ENCODE measurements at regions of chr2 and their contacts with region 1.

Region 1: GRCh38 chr2:30464544-30465170 is 17.6 kb downstream of the LCLAT1 start:
- DNase-seq: no peak
- ATAC-seq: no peak
- H3K4me3 ChIP-seq: peak overlapping the region in 4 of 12 donors; percentile 6 to 31 (median 19)
- H3K27ac ChIP-seq: peak overlapping the region; percentile 17 to 75 (median 54)
- H3K4me1 ChIP-seq: peaks cover 0 to 50% (median 19%) of the 10 kb centered on the region in 12 donors
- H3K27me3 ChIP-seq: no peaks in the 10 kb centered on the region
- CTCF ChIP-seq: no peak
- POLR2A ChIP-seq: no peak

Region 2: DNA sequence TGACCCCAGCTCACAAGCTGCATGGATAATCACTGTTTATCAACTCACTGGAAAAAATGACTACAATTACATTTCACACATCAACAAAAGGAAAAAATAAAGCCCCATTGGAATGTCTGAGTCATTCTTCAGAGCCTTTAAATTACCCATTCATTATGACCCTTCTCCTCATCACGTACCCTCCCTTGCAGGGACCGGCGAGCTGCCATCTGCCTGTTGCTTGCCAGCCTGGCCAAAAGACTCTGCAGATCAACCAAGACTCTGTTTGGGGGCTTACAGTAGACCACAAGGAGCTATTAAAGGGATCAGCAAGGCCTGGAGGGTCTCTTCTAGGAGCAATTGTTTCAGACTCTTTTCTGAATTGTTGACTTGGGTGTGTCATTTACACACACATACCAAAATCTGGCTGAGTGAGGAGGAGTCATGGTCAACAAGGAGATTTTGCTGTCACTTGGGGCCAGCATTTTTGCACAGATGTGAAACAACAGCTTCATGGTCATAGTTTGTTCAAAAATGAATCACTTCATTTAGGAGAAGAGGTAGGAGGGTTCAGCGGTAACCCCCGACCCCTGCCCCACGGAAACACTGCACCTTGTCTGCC is 191.3 kb before region 1 on chr2:
- intact Hi-C with region 1: no loop called
- DNase-seq: no peak
- ATAC-seq: no peak
- H3K4me3 ChIP-seq: no peak overlapping the region
- H3K27ac ChIP-seq: peak overlapping the region in 1 of 12 donors; percentile 29
- H3K4me1 ChIP-seq: peaks cover 0 to 35% (median 11%) of the 10 kb centered on the region in 12 donors
- H3K27me3 ChIP-seq: no peaks in the 10 kb centered on the region
- CTCF ChIP-seq: no peak
- POLR2A ChIP-seq: no peak

Region 3: GRCh38 chr2:30504731-30505130 is 40.1 kb after region 1 on chr2:
- intact Hi-C with region 1: loop called in 1 of 10 experiments (anchors 5 kb)
- DNase-seq: no peak
- ATAC-seq: no peak
- H3K4me3 ChIP-seq: no peak overlapping the region
- H3K27ac ChIP-seq: peak overlapping the region in 2 of 12 donors; percentile 8 to 64
- H3K4me1 ChIP-seq: peaks cover 0 to 51% (median 34%) of the 10 kb centered on the region in 12 donors
- H3K27me3 ChIP-seq: no peaks in the 10 kb centered on the region
- CTCF ChIP-seq: no peak
- POLR2A ChIP-seq: no peak